Activated naive CD4-positive, alpha-beta T cell treated with anti-CD3 and anti-CD28 coated beads for 36 hours (primary cell): ENCODE measurements at regions of chr3 and their contacts with region 1.

Region 1: GRCh38 chr3:192899540-192899982 is 18.1 kb downstream of the MB21D2 start:
- DNase-seq: no peak
- H3K4me3 Mint-ChIP-seq: peak overlapping the region; percentile 22
- H3K27ac Mint-ChIP-seq: peak overlapping the region; percentile 82
- H3K4me1 Mint-ChIP-seq: peaks cover 47% of the 10 kb centered on the region
- H3K27me3 Mint-ChIP-seq: peaks cover 14% of the 10 kb centered on the region

Region 2: GRCh38 chr3:192831111-192831644 is 68.4 kb before region 1 on chr3:
- CTCF ChIA-PET with region 1: interaction called, 4 read pairs
- intact Hi-C with region 1: loop called (anchors 1 kb)
- DNase-seq: no peak
- H3K4me3 Mint-ChIP-seq: no peak overlapping the region
- H3K27ac Mint-ChIP-seq: no peak overlapping the region
- H3K4me1 Mint-ChIP-seq: peaks cover 26% of the 10 kb centered on the region
- H3K27me3 Mint-ChIP-seq: no peaks in the 10 kb centered on the region

Region 3: DNA sequence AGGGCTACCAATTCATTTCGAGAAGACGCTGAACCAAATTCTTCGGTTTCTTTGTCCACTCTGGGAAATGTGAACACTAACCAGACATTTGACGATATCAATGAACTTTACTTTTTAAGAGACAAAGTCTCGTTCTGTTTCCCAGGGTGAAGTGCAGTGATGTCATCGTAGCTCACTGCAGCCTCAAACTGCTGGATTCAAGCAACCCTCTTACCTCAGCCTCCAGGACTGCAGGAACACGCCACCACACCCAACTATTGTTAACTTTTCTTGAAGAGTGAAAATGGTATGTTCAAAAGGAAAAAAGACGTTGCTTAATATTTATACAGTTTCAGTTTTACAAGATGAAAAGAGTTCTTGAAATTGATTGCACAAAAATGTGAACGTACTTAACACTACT is 12.5 kb before region 1 on chr3:
- CTCF ChIA-PET with region 1: interaction called, 4 read pairs
- intact Hi-C with region 1: loop called (anchors 1 kb)
- DNase-seq: peak; percentile 36
- H3K4me3 Mint-ChIP-seq: no peak overlapping the region
- H3K27ac Mint-ChIP-seq: peak overlapping the region; percentile 82
- H3K4me1 Mint-ChIP-seq: peaks cover 59% of the 10 kb centered on the region
- H3K27me3 Mint-ChIP-seq: peaks cover 7% of the 10 kb centered on the region

Region 4: DNA sequence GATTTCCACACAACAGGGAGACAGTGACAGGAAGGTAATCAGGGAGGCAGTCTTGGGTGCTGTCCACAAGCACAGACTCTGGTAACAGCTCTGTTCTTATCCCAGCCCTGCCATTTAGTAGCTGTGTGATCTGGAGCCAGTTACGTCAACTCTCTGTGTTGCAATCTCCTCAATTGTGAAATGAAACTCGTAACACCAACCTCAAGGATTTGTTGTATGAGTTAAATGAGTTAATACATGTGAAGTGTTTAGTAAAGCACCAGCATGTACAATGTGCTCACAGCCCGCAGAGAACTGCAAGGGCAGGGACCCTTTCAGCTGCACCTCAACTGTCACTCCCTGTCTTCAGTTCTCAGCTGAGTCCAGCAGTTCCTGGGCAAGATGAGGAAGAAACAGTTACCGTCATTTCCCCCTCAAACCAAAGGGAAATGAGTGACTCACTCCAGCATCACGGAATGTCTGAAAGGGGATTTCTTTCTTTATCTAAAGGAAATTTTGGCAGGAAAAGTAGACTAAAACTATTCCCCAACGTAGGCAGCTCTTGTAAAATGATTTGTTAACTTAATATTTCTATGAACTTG is 58.0 kb after region 1 on chr3:
- CTCF ChIA-PET with region 1: interaction called, 3 read pairs
- intact Hi-C with region 1: loop called (anchors 1 kb)
- DNase-seq: peak; percentile 14
- H3K4me3 Mint-ChIP-seq: no peak overlapping the region
- H3K27ac Mint-ChIP-seq: no peak overlapping the region
- H3K4me1 Mint-ChIP-seq: peaks cover 23% of the 10 kb centered on the region
- H3K27me3 Mint-ChIP-seq: no peaks in the 10 kb centered on the region

Region 5: GRCh38 chr3:193046371-193046770 is 146.8 kb after region 1 on chr3:
- CTCF ChIA-PET with region 1: no interaction called
- intact Hi-C with region 1: no loop called
- DNase-seq: no peak
- H3K4me3 Mint-ChIP-seq: no peak overlapping the region
- H3K27ac Mint-ChIP-seq: no peak overlapping the region
- H3K4me1 Mint-ChIP-seq: no peaks in the 10 kb centered on the region
- H3K27me3 Mint-ChIP-seq: no peaks in the 10 kb centered on the region